ENCODE measurements at regions of chr21 and their contacts with region 1.

Region 1: DNA sequence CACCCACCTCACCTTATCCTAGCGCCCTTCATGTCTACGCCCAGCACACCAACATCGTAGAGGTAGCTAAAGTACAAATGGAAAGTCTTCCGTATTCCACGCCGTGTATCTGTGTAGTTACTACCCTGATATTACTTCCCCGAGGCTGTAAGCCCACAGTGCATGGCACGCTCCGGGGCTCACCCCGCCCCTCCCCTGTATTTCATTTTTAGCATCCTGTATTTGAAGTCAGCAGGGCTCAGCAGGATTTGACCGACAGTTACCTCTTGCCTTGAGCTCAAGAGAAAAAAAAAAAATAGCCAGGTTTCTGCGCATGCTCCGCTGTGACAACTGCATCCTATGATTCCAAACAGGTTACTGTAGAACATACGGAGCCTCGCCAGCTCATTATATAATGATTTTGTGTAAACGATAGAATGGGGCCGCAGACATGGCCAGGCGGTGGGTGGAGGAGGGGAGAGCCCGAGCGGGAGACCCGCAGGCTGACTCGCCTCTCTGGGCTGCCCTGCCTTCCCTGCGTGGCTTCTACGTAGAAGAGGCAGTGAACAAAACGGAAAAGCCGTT is 1.3 kb downstream of the ABCG1 start:
- DNase-seq: peak; percentile 67
- H3K4me3 Mint-ChIP-seq: peak overlapping the region; percentile 90
- H3K27ac Mint-ChIP-seq: peak overlapping the region; percentile 81
- H3K4me1 Mint-ChIP-seq: peaks cover 21% of the 10 kb centered on the region
- H3K27me3 Mint-ChIP-seq: no peaks in the 10 kb centered on the region
- CTCF ChIP-seq: no peak

Region 2: DNA sequence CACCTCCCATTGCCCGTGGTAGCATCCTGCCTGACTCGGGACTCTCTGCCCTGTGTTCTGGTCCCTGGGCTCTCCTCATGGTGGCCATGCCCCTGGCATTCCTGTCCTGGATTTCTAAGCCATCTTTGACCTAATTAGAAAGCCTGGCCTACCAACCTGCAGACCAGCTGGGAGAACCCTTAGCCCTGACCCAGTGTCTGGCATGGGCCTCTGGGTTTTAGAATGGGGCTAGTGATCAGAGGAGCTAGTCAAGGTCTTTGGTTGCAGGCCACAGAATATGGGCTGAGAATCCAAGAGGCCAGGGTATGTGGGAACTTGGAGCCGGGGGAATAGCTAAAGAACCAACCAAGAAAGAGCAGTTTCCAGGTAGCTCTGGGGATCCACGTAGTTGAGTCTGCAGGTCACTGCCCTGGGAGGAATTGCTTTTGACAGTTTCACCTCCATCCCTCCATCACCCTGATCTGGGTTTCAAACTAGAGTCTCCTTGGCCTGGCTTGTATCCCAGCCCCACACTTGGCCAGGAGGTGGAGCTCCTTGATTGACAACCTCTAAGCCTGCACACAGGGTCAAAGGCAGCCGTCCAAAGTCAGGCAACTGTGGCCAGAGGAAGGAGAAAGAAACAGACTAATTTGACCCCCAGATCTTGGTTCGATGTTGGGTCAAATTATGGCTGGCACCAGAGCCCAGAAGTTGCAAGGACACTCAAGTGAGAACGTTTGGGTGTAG is 56.0 kb before region 1 on chr21:
- CTCF ChIA-PET with region 1: no interaction called
- POLR2A ChIA-PET with region 1: interaction called, 12 read pairs
- intact Hi-C with region 1: loop called (anchors 1 kb)
- DNase-seq: peak; percentile 65
- H3K4me3 Mint-ChIP-seq: no peak overlapping the region
- H3K27ac Mint-ChIP-seq: no peak overlapping the region
- H3K4me1 Mint-ChIP-seq: peaks cover under 1% of the 10 kb centered on the region
- H3K27me3 Mint-ChIP-seq: no peaks in the 10 kb centered on the region
- CTCF ChIP-seq: peak; percentile 71

Region 3: GRCh38 chr21:42199488-42200458 is 20.4 kb before region 1 on chr21:
- CTCF ChIA-PET with region 1: no interaction called
- POLR2A ChIA-PET with region 1: interaction called, 83 read pairs
- intact Hi-C with region 1: no loop called
- DNase-seq: peak; percentile 85
- H3K4me3 Mint-ChIP-seq: no peak overlapping the region
- H3K27ac Mint-ChIP-seq: peak overlapping the region; percentile 43
- H3K4me1 Mint-ChIP-seq: peaks cover 36% of the 10 kb centered on the region
- H3K27me3 Mint-ChIP-seq: no peaks in the 10 kb centered on the region
- CTCF ChIP-seq: no peak

Region 4: DNA sequence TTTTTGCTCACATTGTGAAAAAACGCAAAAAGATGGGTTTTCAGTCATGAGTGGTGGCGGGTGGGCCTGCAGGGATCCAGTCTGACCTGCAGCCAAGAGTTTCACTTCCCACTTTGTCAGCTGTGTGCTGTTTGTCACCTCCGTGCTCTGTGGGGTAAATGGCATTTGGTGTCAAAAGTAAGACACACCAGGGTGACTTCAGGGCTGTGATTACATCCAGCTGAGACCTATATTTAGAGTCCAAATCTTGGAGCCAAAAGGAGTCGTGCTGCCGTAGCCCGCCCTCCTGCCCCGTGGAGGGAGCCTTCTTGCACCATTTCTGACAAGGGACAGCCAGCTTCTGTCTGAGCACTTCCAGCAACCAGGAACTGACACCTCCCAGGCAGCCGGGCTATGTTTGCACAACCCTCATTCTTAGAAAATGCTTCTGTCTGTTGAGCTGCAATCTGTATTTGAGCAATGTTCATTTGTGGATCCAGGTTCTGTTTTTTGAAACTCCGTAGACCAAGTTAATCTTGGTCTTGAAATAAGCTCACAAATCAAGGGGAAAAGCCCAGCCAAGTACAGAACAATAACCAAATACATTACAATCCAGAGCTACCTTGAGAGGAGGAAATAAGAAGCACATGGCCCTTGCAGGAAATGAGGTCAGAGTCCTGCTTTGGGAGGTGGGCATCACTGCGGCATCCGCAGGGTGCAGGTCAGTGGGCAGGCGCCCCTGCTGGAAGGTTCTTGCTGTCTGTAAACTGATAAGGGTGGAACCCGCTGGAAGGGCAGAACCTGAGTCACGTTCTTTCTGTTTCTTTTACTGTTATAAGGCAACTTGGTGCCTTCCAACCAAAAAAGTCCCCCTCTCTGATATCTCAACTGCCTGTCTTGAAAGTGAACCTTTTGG is 13.1 kb after region 1 on chr21:
- CTCF ChIA-PET with region 1: interaction called, 15 read pairs
- POLR2A ChIA-PET with region 1: interaction called, 60 read pairs
- intact Hi-C with region 1: loop called (anchors 1 kb)
- DNase-seq: no peak
- H3K4me3 Mint-ChIP-seq: peak overlapping the region; percentile 47
- H3K27ac Mint-ChIP-seq: no peak overlapping the region
- H3K4me1 Mint-ChIP-seq: peaks cover 25% of the 10 kb centered on the region
- H3K27me3 Mint-ChIP-seq: no peaks in the 10 kb centered on the region
- CTCF ChIP-seq: no peak

Region 5: GRCh38 chr21:42550817-42551216 is 330.6 kb after region 1 on chr21:
- CTCF ChIA-PET with region 1: no interaction called
- POLR2A ChIA-PET with region 1: no interaction called
- intact Hi-C with region 1: no loop called
- DNase-seq: no peak
- H3K4me3 Mint-ChIP-seq: no peak overlapping the region
- H3K27ac Mint-ChIP-seq: no peak overlapping the region
- H3K4me1 Mint-ChIP-seq: no peaks in the 10 kb centered on the region
- H3K27me3 Mint-ChIP-seq: no peaks in the 10 kb centered on the region
- CTCF ChIP-seq: no peak